AG04450 (cell line): ENCODE measurements at regions of chrX and their contacts with region 1.

Region 1: DNA sequence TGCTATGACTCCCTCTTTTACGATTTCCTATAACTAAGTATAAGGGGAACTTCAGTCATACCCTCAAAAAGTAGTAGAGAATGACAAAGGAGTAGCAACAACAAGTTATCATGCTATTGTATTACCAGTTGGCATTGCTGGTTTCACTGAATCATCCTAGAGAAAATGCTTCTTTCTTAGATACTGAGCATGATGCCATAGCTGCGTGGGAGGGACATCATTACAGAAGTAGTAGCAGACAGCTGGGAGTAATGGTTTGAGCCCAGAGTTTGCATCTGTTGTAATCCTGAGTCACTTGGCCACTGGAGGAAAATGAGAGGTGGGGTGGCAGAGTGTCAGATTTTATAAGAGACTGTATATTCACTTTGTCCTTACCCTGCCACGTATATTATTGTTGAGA is 38.6 kb downstream of the MTMR1 start:
- DNase-seq: peak; percentile 68
- H3K4me3 ChIP-seq: no peak overlapping the region
- H3K27ac ChIP-seq: no peak overlapping the region
- H3K27me3 ChIP-seq: no peaks in the 10 kb centered on the region
- CTCF ChIP-seq: no peak

Region 2: DNA sequence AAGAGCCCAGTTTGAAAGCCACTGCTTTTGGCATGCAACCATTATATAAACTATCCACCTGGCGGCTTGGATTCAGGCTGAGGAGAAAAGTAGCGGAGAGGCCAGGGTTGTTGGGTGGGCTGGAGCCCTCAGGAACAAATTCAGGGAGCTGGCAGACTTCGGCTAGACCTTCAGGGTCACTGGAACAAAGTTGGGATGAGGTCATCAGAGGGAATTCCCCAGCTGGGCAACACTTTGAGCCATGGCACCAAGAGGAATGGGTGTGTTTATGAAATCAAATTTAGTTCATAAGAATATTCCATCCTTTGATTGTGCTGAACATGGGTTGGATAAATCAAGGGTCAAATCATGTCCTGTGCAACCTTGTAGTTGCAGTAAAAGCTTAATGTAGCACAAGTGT is 16.6 kb before region 1 on chrX:
- CTCF ChIA-PET with region 1: interaction called, 10 read pairs
- POLR2A ChIA-PET with region 1: no interaction called
- DNase-seq: no peak
- H3K4me3 ChIP-seq: no peak overlapping the region
- H3K27ac ChIP-seq: no peak overlapping the region
- H3K27me3 ChIP-seq: no peaks in the 10 kb centered on the region
- CTCF ChIP-seq: no peak